ENCODE measurements at regions of chr10 and their contacts with region 1.

Region 1: GRCh38 chr10:102167861-102168260 is 15.7 kb downstream of the NOLC1 start:
- DNase-seq: no peak
- H3K4me3 Mint-ChIP-seq: no peak overlapping the region
- H3K27ac Mint-ChIP-seq: no peak overlapping the region
- H3K4me1 Mint-ChIP-seq: peaks cover 6% of the 10 kb centered on the region
- H3K27me3 Mint-ChIP-seq: no peaks in the 10 kb centered on the region

Region 2: GRCh38 chr10:102132563-102133372 is 35.1 kb before region 1 on chr10 and contains the start of gene PPRC1:
- intact Hi-C with region 1: loop called (anchors 1 kb)
- DNase-seq: peak; percentile 98
- H3K4me3 Mint-ChIP-seq: peak within 1 kb of the TSS; percentile 95
- H3K27ac Mint-ChIP-seq: peak within 1 kb of the TSS; percentile 98
- H3K4me1 Mint-ChIP-seq: peaks cover 26% of the 10 kb centered on the region
- H3K27me3 Mint-ChIP-seq: no peaks in the 10 kb centered on the region
- total RNA-seq, gene PPRC1: 91.3 and 94.1 TPM in 2 replicates

Region 3: GRCh38 chr10:102211615-102212299 is 43.9 kb after region 1 on chr10:
- intact Hi-C with region 1: loop called (anchors 5 kb)
- DNase-seq: no peak
- H3K4me3 Mint-ChIP-seq: no peak overlapping the region
- H3K27ac Mint-ChIP-seq: no peak overlapping the region
- H3K4me1 Mint-ChIP-seq: peaks cover 1% of the 10 kb centered on the region
- H3K27me3 Mint-ChIP-seq: peaks cover 10% of the 10 kb centered on the region

Region 4: DNA sequence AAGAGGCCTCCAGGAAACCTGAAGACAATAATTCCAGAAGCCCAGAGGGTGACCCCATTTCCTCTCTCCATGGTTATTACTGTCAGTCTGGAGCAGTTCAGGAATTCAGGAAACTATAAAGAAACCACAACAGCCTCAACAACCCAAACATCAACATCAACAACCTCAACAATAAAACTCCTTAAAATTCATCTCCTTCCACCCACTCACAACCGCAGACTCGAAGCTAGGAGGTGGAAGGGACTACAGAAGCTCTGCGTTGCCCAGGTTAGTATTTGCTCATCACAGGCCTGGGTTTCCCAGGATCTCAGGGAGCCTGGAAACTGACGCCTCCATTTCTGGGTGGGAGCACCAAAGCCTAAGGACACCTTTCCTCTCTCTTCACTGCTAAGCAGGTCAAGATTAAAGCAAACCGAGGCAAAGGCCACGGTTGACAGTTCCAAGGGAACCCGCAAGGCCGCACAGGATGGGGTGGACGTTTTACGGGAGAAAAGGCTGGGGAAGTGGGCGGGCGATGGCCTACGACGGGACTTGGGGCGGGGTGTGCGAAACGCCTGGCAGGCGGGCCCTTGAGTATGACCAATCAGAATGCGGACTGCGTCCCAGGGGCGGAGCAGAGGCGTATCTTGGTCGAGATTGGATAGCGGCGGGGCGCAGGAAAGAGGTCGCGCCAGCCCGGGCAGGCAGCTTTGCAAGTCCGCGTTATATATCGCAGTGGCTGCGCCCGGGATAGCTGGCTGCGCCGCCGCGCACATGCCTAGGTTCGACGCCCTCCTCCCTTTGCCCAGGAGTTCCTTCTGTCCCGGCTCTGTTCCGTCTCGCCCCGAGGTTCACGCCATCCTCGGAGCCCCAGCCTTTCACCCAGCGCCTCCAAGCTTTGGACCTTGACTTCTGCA is 58.0 kb after region 1 on chr10 and contains the start of gene ELOVL3:
- intact Hi-C with region 1: loop called (anchors 1 kb)
- DNase-seq: peak; percentile 86
- H3K4me3 Mint-ChIP-seq: peak within 1 kb of the TSS; percentile 59
- H3K27ac Mint-ChIP-seq: no peak within 1 kb of the TSS
- H3K4me1 Mint-ChIP-seq: peaks cover 23% of the 10 kb centered on the region
- H3K27me3 Mint-ChIP-seq: peaks cover 47% of the 10 kb centered on the region
- total RNA-seq, gene ELOVL3: not detected in 2 replicates

Region 5: GRCh38 chr10:102231357-102232318 is 63.8 kb after region 1 on chr10:
- intact Hi-C with region 1: loop called (anchors 1 kb)
- DNase-seq: peak; percentile 69
- H3K4me3 Mint-ChIP-seq: peak overlapping the region; percentile 62
- H3K27ac Mint-ChIP-seq: no peak overlapping the region
- H3K4me1 Mint-ChIP-seq: peaks cover 9% of the 10 kb centered on the region
- H3K27me3 Mint-ChIP-seq: peaks cover 55% of the 10 kb centered on the region

Region 6: GRCh38 chr10:102352066-102352715 is 184.3 kb after region 1 on chr10:
- intact Hi-C with region 1: loop called (anchors 1 kb)
- DNase-seq: peak; percentile 38
- H3K4me3 Mint-ChIP-seq: no peak overlapping the region
- H3K27ac Mint-ChIP-seq: no peak overlapping the region
- H3K4me1 Mint-ChIP-seq: no peaks in the 10 kb centered on the region
- H3K27me3 Mint-ChIP-seq: no peaks in the 10 kb centered on the region